GM18951 (cell line): ENCODE measurements at regions of chr4 and their contacts with region 1.

Region 1: GRCh38 chr4:96974295-96974694 is 1134.4 kb downstream of the PDHA2 start:
- POLR2A ChIP-seq: no peak

Region 2: DNA sequence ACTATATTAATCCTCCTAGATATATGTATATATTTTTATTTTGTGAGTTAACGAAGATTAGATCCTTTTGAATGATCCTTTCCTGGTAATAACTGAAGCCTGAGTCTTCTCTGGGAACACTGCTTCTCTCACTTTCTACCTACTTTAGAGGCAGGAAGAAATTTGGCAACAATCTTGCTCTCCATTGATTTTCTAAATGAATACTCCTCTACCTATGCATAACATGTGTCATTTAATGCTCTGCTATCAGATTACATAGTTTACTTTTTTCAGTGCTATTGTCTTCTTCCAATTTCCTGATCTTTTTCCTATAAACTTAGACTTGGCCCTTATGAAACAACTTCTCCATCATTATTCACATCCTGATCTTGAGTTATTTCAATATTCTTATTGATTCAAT is 1194.8 kb before region 1 on chr4:
- in situ Hi-C with region 1: loop called (anchors 10 kb)
- POLR2A ChIP-seq: no peak